ENCODE measurements at regions of chr14 and their contacts with region 1.

Region 1: DNA sequence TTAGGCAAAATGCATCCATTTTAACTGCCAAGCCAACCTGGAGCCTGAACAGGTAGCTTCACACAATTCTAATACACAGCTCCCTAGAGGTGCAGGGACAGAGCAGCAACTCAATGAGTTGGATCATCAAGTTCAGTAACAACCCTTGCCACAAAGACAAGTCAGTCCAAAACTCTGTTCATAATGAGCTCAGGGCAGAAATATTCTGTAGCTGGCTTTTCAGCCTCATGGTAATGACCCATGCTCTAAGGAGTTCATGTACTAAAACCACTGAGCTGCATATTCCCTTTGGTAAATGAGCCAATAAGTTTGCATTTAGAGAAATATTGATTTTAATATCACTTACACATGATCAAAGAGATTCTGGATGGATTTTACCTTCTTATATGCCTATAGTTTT is 316.1 kb downstream of the SEC23A start:
- DNase-seq: no peak
- H3K4me3 ChIP-seq: no peak overlapping the region
- H3K27ac ChIP-seq: no peak overlapping the region
- H3K4me1 ChIP-seq: no peaks in the 10 kb centered on the region
- H3K27me3 ChIP-seq: no peaks in the 10 kb centered on the region
- CTCF ChIP-seq: no peak
- POLR2A ChIP-seq: no peak

Region 2: GRCh38 chr14:38737686-38738407 is 49.1 kb before region 1 on chr14:
- intact Hi-C with region 1: loop called (anchors 10 kb)
- DNase-seq: no peak
- H3K4me3 ChIP-seq: no peak overlapping the region
- H3K27ac ChIP-seq: no peak overlapping the region
- H3K4me1 ChIP-seq: no peaks in the 10 kb centered on the region
- H3K27me3 ChIP-seq: no peaks in the 10 kb centered on the region
- CTCF ChIP-seq: no peak
- POLR2A ChIP-seq: no peak

Region 3: DNA sequence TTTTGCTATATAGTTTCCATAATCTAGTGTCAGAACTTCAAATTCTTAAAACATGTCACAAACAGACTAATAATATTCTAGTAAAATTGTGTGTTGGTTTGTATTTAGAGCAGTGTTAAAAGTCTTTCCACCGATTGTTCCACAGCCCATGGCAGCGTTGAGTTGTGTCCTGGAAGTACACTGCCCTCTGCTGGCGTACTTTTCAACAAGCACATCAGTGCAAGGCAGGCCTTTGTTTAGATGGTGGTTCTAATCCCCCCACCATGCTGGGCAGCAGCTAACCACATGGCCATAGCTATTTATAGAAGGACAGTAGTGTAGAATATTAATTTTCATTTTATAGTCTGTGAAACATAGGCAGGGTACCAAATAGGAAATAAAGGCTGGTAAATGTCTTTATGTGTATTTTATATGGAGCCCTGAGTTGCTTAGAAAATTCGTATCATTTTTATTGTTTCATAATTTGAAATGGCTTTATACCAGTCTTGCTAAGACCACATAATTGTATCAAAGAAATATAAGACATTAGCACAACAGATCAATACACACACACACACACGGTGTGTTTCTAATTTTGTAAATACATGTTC is 80.7 kb after region 1 on chr14:
- intact Hi-C with region 1: no loop called
- DNase-seq: peak; percentile 88
- H3K4me3 ChIP-seq: no peak overlapping the region
- H3K27ac ChIP-seq: no peak overlapping the region
- H3K4me1 ChIP-seq: no peaks in the 10 kb centered on the region
- H3K27me3 ChIP-seq: no peaks in the 10 kb centered on the region
- CTCF ChIP-seq: peak; percentile 16 to 62 (median 61)
- POLR2A ChIP-seq: no peak

Measured in testis (tissue), 5 donors.